Caco-2 (cell line): ENCODE measurements at regions of chr12 and their contacts with region 1.

Region 1: GRCh38 chr12:12376646-12377448 is 20.0 kb downstream of the BORCS5 start:
- DNase-seq: peak; percentile 64 to 71
- H3K4me3 ChIP-seq: no peak overlapping the region
- H3K4me3 Mint-ChIP-seq: no peak overlapping the region
- H3K27ac Mint-ChIP-seq: no peak overlapping the region
- H3K4me1 ChIP-seq: peaks cover 34% of the 10 kb centered on the region
- H3K4me1 Mint-ChIP-seq: peaks cover 38% of the 10 kb centered on the region
- H3K27me3 ChIP-seq: no peaks in the 10 kb centered on the region
- H3K27me3 Mint-ChIP-seq: no peaks in the 10 kb centered on the region
- CTCF ChIP-seq: peak; percentile 72 to 96

Region 2: DNA sequence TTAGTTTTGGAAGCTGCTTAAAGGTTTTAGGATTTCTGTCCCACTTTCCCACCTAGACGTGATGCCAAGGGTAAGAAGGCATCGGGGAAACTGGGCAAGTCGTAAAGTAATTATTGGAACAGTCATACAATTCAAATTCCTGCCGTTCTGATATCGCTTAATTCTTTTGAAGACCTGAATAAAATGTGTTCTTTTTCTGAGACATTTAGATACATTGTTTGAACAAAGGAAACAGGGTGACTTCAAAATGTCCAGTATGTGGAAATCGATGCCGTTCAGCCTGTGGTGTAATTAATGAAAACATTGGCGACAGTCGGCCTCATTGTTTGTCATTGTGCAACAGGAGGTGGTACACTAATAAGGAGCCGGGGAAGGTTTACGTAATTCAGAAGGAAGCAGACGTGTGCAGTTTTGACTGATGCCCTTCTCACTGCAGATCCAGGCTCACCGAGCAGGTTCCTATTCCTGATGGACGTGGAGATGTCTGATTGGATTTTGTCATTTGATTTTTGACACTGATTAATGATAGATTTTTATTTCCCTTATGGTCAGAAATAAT is 72.7 kb after region 1 on chr12:
- CTCF ChIA-PET with region 1: interaction called, 5 read pairs
- POLR2A ChIA-PET with region 1: no interaction called
- intact Hi-C with region 1: loop called (anchors 2 kb)
- DNase-seq: peak; percentile 67 to 69
- H3K4me3 ChIP-seq: no peak overlapping the region
- H3K4me3 Mint-ChIP-seq: no peak overlapping the region
- H3K27ac Mint-ChIP-seq: peak overlapping the region; percentile 34
- H3K4me1 ChIP-seq: peaks cover 25% of the 10 kb centered on the region
- H3K4me1 Mint-ChIP-seq: peaks cover 26% of the 10 kb centered on the region
- H3K27me3 ChIP-seq: no peaks in the 10 kb centered on the region
- H3K27me3 Mint-ChIP-seq: no peaks in the 10 kb centered on the region
- CTCF ChIP-seq: no peak

Region 3: GRCh38 chr12:12505544-12506495 is 129.0 kb after region 1 on chr12:
- CTCF ChIA-PET with region 1: interaction called, 11 read pairs
- POLR2A ChIA-PET with region 1: no interaction called
- intact Hi-C with region 1: loop called (anchors 1 kb)
- DNase-seq: peak in 1 of 2 experiments; percentile 36
- H3K4me3 ChIP-seq: no peak overlapping the region
- H3K4me3 Mint-ChIP-seq: peak overlapping the region; percentile 42
- H3K27ac Mint-ChIP-seq: peak overlapping the region; percentile 19
- H3K4me1 ChIP-seq: peaks cover 37% of the 10 kb centered on the region
- H3K4me1 Mint-ChIP-seq: peaks cover 40% of the 10 kb centered on the region
- H3K27me3 ChIP-seq: no peaks in the 10 kb centered on the region
- H3K27me3 Mint-ChIP-seq: no peaks in the 10 kb centered on the region
- CTCF ChIP-seq: no peak

Region 4: GRCh38 chr12:12611512-12612306 is 234.9 kb after region 1 on chr12 and contains the start of gene CREBL2:
- CTCF ChIA-PET with region 1: interaction called, 5 read pairs
- POLR2A ChIA-PET with region 1: no interaction called
- intact Hi-C with region 1: loop called (anchors 1 kb)
- DNase-seq: peak; percentile 96
- H3K4me3 ChIP-seq: peak within 1 kb of the TSS; percentile 66
- H3K4me3 Mint-ChIP-seq: peak within 1 kb of the TSS; percentile 89
- H3K27ac Mint-ChIP-seq: peak within 1 kb of the TSS; percentile 57
- H3K4me1 ChIP-seq: peaks cover 11% of the 10 kb centered on the region
- H3K4me1 Mint-ChIP-seq: peaks cover 24% of the 10 kb centered on the region
- H3K27me3 ChIP-seq: no peaks in the 10 kb centered on the region
- H3K27me3 Mint-ChIP-seq: no peaks in the 10 kb centered on the region
- CTCF ChIP-seq: no peak
- total RNA-seq, gene CREBL2: 25.0 and 26.3 TPM in 2 replicates

Region 5: DNA sequence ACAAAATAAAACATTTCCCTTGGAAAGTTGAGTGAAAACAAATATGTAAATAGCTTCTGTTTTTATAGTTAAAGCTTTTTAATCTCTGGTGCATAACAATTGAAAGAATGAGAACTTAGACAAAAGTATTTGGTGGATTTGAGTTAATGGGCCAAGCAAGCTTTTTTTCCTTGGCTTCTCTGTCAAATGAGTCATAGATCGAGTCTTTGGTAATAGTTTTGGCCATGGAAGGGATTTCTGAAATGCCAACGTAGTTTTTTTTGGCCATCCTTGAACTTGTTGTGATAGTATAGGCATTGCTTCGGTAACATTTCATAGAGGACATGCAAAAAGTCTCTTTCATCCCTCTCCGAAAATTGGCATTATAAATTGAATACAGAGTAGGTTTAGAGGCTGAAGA is 284.2 kb after region 1 on chr12:
- CTCF ChIA-PET with region 1: interaction called, 6 read pairs
- POLR2A ChIA-PET with region 1: no interaction called
- intact Hi-C with region 1: loop called (anchors 1 kb)
- DNase-seq: no peak
- H3K4me3 ChIP-seq: no peak overlapping the region
- H3K4me3 Mint-ChIP-seq: no peak overlapping the region
- H3K27ac Mint-ChIP-seq: no peak overlapping the region
- H3K4me1 ChIP-seq: no peaks in the 10 kb centered on the region
- H3K4me1 Mint-ChIP-seq: no peaks in the 10 kb centered on the region
- H3K27me3 ChIP-seq: no peaks in the 10 kb centered on the region
- H3K27me3 Mint-ChIP-seq: no peaks in the 10 kb centered on the region
- CTCF ChIP-seq: no peak

Region 6: GRCh38 chr12:12736759-12737676 is 360.2 kb after region 1 on chr12:
- CTCF ChIA-PET with region 1: interaction called, 16 read pairs
- POLR2A ChIA-PET with region 1: interaction called, 9 read pairs
- intact Hi-C with region 1: no loop called
- DNase-seq: peak in 1 of 2 experiments; percentile 47
- H3K4me3 ChIP-seq: no peak overlapping the region
- H3K4me3 Mint-ChIP-seq: no peak overlapping the region
- H3K27ac Mint-ChIP-seq: peak overlapping the region; percentile 10
- H3K4me1 ChIP-seq: no peaks in the 10 kb centered on the region; the same call in 1 of the 2 replicates
- H3K4me1 Mint-ChIP-seq: peaks cover 25% of the 10 kb centered on the region
- H3K27me3 ChIP-seq: no peaks in the 10 kb centered on the region
- H3K27me3 Mint-ChIP-seq: no peaks in the 10 kb centered on the region
- CTCF ChIP-seq: peak; percentile 66 to 68

Region 7: GRCh38 chr12:12813120-12814101 is 436.6 kb after region 1 on chr12 and contains the start of gene DDX47:
- CTCF ChIA-PET with region 1: no interaction called
- POLR2A ChIA-PET with region 1: no interaction called
- intact Hi-C with region 1: no loop called
- DNase-seq: peak; percentile 97 to 99
- H3K4me3 ChIP-seq: peak within 1 kb of the TSS; percentile 78
- H3K4me3 Mint-ChIP-seq: peak within 1 kb of the TSS; percentile 96
- H3K27ac Mint-ChIP-seq: peak within 1 kb of the TSS; percentile 95
- H3K4me1 ChIP-seq: peaks cover 52% of the 10 kb centered on the region
- H3K4me1 Mint-ChIP-seq: peaks cover 39% of the 10 kb centered on the region
- H3K27me3 ChIP-seq: no peaks in the 10 kb centered on the region
- H3K27me3 Mint-ChIP-seq: no peaks in the 10 kb centered on the region
- CTCF ChIP-seq: peak; percentile 99
- total RNA-seq, gene DDX47: 121 and 138 TPM in 2 replicates